ENCODE measurements at regions of chr3 and their contacts with region 1.

Region 1: GRCh38 chr3:52339612-52340011 is 23.5 kb downstream of the DNAH1 start:
- DNase-seq: no peak
- H3K4me3 ChIP-seq: no peak overlapping the region
- H3K27ac ChIP-seq: no peak overlapping the region
- H3K4me1 ChIP-seq: no peaks in the 10 kb centered on the region
- H3K27me3 ChIP-seq: no peaks in the 10 kb centered on the region
- CTCF ChIP-seq: peak in 2 of 3 experiments; percentile 57 to 78; a peak in 3 of 4 replicates
- EP300 ChIP-seq: no peak
- POLR2A ChIP-seq: no peak
- RAD21 ChIP-seq: peak; percentile 89

Region 2: DNA sequence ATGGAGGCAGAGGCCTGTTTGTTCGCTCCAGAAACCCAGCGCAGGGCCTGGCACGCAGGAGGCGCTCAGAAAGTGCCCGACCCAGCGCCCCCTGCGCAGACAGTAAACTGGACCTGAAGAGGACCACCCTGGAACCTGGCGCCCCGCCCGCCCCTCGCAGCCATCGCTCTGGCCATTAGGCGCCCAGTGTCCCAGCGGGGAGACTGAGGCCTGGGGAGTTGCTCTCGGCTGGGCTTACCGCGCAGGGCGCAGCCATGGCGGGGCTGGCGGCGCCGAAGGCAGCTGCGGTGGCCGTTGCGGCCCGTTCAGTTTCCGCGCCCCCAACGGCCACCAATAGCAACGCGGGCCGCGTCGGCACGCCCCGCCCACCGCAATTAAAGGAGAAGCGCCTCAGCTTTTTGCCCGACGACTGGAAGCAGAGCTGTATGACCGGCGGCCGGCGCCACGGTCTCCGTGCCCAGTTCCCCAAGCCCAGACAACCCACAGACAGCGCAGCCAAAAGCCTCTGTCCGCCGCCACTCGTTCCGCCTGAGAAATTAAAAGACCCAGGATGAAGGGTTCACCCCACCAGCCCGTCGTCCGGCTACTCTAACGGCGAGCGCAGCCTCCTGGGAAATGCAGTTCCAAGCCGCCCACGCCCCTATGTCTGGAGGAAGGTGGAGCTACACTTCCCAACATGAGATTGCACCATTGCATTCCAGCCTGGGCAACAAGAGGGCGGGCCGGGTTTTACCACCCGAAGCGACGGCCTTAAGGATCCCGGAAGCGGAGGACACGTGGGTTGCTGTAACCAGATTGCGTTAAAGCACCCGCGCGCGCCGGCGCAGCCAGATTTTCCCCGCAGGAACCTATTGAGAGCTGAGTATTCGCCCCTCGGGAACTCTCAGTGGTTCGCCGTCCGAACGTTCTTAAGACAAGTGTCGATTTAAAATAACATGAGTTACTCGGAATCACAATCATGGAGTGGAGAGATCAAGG is 185.2 kb before region 1 on chr3 and contains the start of gene POC1A:
- CTCF ChIA-PET with region 1: no interaction called
- POLR2A ChIA-PET with region 1: no interaction called
- DNase-seq: peak; percentile 80 to 96
- H3K4me3 ChIP-seq: peak within 1 kb of the TSS; percentile 79 to 90 (median 86)
- H3K27ac ChIP-seq: peak within 1 kb of the TSS; percentile 58; the same call in 1 of the 2 replicates
- H3K4me1 ChIP-seq: peaks cover 2 to 6% (median 4%) of the 10 kb centered on the region in 4 experiments; a peak in 4 of 7 replicates
- H3K27me3 ChIP-seq: no peaks in the 10 kb centered on the region
- CTCF ChIP-seq: no peak
- EP300 ChIP-seq: no peak
- POLR2A ChIP-seq: peak in 1 of 2 experiments; percentile 62; a peak in 2 of 3 replicates
- RAD21 ChIP-seq: no peak
- total RNA-seq, gene POC1A: 35.7 and 39.2 TPM in 2 replicates

Region 3: GRCh38 chr3:52231502-52232293 is 107.9 kb before region 1 on chr3:
- CTCF ChIA-PET with region 1: interaction called, 131 read pairs
- POLR2A ChIA-PET with region 1: interaction called, 3 read pairs
- DNase-seq: peak in 1 of 2 experiments; percentile 97
- H3K4me3 ChIP-seq: no peak overlapping the region
- H3K27ac ChIP-seq: no peak overlapping the region
- H3K4me1 ChIP-seq: peaks cover 0 to 11% (median 5%) of the 10 kb centered on the region in 4 experiments; a peak in 5 of 7 replicates
- H3K27me3 ChIP-seq: no peaks in the 10 kb centered on the region
- CTCF ChIP-seq: peak in 2 of 3 experiments; percentile 84 to 98; a peak in 3 of 4 replicates
- EP300 ChIP-seq: no peak
- POLR2A ChIP-seq: no peak
- RAD21 ChIP-seq: peak; percentile 79 to 81

Region 4: GRCh38 chr3:52278510-52279069 is 61.0 kb before region 1 on chr3 and contains the start of gene WDR82:
- CTCF ChIA-PET with region 1: interaction called, 34 read pairs
- POLR2A ChIA-PET with region 1: interaction called, 6 read pairs
- DNase-seq: peak; percentile 85 to 99
- H3K4me3 ChIP-seq: peak within 1 kb of the TSS; percentile 94 to 99 (median 97)
- H3K27ac ChIP-seq: peak within 1 kb of the TSS; percentile 98
- H3K4me1 ChIP-seq: peaks cover 0 to 3% (median under 1%) of the 10 kb centered on the region in 4 experiments; a peak in 3 of 7 replicates
- H3K27me3 ChIP-seq: no peaks in the 10 kb centered on the region
- CTCF ChIP-seq: peak; percentile 58 to 74 (median 68)
- EP300 ChIP-seq: no peak
- POLR2A ChIP-seq: peak; percentile 96 to 97
- RAD21 ChIP-seq: peak; percentile 23 to 45; a peak in 3 of 4 replicates
- total RNA-seq, gene WDR82: 77.2 and 82.7 TPM in 2 replicates

Region 5: DNA sequence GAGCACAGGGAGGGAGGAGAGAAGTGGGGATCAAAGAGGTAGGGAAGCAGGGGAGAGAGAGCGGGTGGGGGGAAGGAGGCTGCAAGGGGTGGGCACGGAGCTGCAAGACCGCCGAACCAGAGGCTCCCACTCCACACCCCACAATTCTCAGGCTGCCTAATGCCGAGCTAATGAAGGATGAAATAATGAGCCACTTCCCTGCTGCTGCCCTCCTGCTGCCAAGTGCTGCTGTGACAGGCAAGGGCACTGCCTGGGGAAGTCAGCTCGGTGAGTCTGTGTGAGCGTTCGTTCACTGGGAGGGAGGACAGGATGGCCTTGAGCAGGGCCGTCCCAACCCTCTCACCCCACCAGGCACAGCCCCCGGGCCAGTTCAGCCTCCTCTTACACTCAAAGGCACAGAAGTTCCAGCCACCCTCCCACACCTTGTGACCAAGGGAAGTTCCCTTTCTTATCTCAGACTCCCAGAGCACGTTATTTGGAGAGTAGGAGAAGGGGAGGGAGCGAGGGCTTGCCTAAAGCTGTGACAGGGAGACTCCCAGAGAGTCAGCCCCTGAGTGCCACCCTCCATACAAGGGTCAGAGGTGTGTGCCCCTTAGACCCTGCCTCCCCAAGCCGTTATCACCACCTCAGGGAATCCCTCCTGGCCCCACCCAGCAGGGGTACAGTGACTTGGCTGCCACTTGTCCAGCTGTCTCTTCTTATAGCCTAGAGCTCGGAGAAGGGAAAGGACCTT is 39.6 kb before region 1 on chr3:
- CTCF ChIA-PET with region 1: interaction called, 89 read pairs
- POLR2A ChIA-PET with region 1: interaction called, 3 read pairs
- DNase-seq: peak in 1 of 2 experiments; percentile 67
- H3K4me3 ChIP-seq: peak overlapping the region; percentile 7 to 57 (median 44); a peak in 7 of 8 replicates
- H3K27ac ChIP-seq: no peak overlapping the region
- H3K4me1 ChIP-seq: peaks cover 0 to 26% (median 20%) of the 10 kb centered on the region in 4 experiments; a peak in 6 of 7 replicates
- H3K27me3 ChIP-seq: peaks cover 0 to 8% (median 2%) of the 10 kb centered on the region in 4 experiments; a peak in 3 of 7 replicates
- CTCF ChIP-seq: peak in 1 of 3 experiments; percentile 15; a peak in 1 of 4 replicates
- EP300 ChIP-seq: no peak
- POLR2A ChIP-seq: no peak
- RAD21 ChIP-seq: no peak

Region 6: DNA sequence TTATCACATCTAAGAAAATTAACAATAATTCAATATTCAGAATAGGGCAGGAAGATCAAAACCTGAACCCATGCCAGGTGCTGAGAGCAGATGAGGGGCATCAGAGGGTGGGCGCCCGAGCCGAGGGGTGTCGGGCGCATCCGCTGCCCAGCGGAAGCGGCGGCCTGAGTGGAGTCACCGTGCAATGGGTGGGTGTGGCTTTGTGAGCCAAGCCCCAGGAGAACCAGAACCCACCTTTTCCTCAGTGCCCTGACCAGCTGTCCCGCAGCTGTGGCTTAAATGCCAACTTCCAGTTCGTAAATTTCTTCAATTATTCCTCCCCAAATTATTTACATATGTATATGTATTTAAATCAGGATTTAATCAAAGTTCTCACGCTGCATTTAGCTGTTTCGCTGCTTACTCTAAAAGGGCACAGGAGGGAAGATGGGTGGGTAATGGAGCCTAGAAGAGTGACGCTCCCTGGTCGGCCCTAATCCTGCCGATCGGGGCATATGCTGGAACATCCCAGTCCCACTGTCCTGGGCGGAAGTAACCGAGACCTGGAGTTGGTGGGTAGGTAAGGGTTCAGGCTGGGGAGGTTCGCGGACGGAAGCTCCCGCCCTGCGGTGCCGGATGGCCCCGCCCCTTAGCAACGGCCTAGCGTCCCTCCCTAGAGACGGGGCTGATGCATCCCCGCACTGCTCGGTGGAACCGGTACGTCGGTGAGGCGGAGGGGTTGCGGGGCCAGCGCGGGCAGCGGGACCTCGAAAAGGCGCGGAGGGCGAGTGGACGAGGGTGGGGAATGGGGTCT is 22.2 kb before region 1 on chr3:
- CTCF ChIA-PET with region 1: interaction called, 27 read pairs
- POLR2A ChIA-PET with region 1: no interaction called
- DNase-seq: peak; percentile 56 to 92
- H3K4me3 ChIP-seq: peak overlapping the region; percentile 39 to 62 (median 48); a peak in 7 of 8 replicates
- H3K27ac ChIP-seq: no peak overlapping the region
- H3K4me1 ChIP-seq: peaks cover 0 to 3% (median 3%) of the 10 kb centered on the region in 4 experiments; a peak in 5 of 7 replicates
- H3K27me3 ChIP-seq: peaks cover 0 to 14% (median 10%) of the 10 kb centered on the region in 4 experiments; a peak in 4 of 7 replicates
- CTCF ChIP-seq: no peak
- EP300 ChIP-seq: no peak
- POLR2A ChIP-seq: peak in 1 of 2 experiments; percentile 49; a peak in 1 of 3 replicates
- RAD21 ChIP-seq: no peak

Region 7: GRCh38 chr3:52366527-52366926 is 26.9 kb after region 1 on chr3:
- CTCF ChIA-PET with region 1: interaction called, 46 read pairs
- POLR2A ChIA-PET with region 1: interaction called, 4 read pairs
- DNase-seq: no peak
- H3K4me3 ChIP-seq: no peak overlapping the region
- H3K27ac ChIP-seq: no peak overlapping the region
- H3K4me1 ChIP-seq: peaks cover 0 to 11% (median 0%) of the 10 kb centered on the region in 4 experiments; a peak in 3 of 7 replicates
- H3K27me3 ChIP-seq: peaks cover 0 to 1% (median 0%) of the 10 kb centered on the region in 4 experiments; a peak in 2 of 7 replicates
- CTCF ChIP-seq: no peak
- EP300 ChIP-seq: no peak
- POLR2A ChIP-seq: no peak
- RAD21 ChIP-seq: no peak

Region 8: GRCh38 chr3:52544937-52545336 is 205.3 kb after region 1 on chr3:
- CTCF ChIA-PET with region 1: no interaction called
- POLR2A ChIA-PET with region 1: no interaction called
- DNase-seq: no peak
- H3K4me3 ChIP-seq: no peak overlapping the region
- H3K27ac ChIP-seq: no peak overlapping the region
- H3K4me1 ChIP-seq: no peaks in the 10 kb centered on the region
- H3K27me3 ChIP-seq: no peaks in the 10 kb centered on the region
- CTCF ChIP-seq: no peak
- EP300 ChIP-seq: no peak
- POLR2A ChIP-seq: no peak
- RAD21 ChIP-seq: no peak

Region 9: GRCh38 chr3:52570076-52570475 is 230.5 kb after region 1 on chr3:
- CTCF ChIA-PET with region 1: no interaction called
- POLR2A ChIA-PET with region 1: no interaction called
- DNase-seq: no peak
- H3K4me3 ChIP-seq: no peak overlapping the region
- H3K27ac ChIP-seq: no peak overlapping the region
- H3K4me1 ChIP-seq: no peaks in the 10 kb centered on the region
- H3K27me3 ChIP-seq: no peaks in the 10 kb centered on the region
- CTCF ChIP-seq: no peak
- EP300 ChIP-seq: no peak
- POLR2A ChIP-seq: no peak
- RAD21 ChIP-seq: no peak

Measured in H1 (cell line).